Heart left ventricle (tissue), 16 donors: ENCODE measurements at regions of chr12 and their contacts with region 1.

Region 1: GRCh38 chr12:89212339-89212771 is 139.9 kb downstream of the DUSP6 start:
- DNase-seq: peak in 4 of 5 donors; percentile 38 to 54 (median 48)
- ATAC-seq: peak; percentile 83 to 97 (median 86)
- H3K4me3 ChIP-seq: no peak overlapping the region
- H3K27ac ChIP-seq: peak overlapping the region; percentile 35 to 76 (median 60)
- H3K4me1 ChIP-seq: peaks cover 0 to 43% (median 9%) of the 10 kb centered on the region in 12 donors
- H3K27me3 ChIP-seq: no peaks in the 10 kb centered on the region
- CTCF ChIP-seq: no peak
- POLR2A ChIP-seq: no peak

Region 2: DNA sequence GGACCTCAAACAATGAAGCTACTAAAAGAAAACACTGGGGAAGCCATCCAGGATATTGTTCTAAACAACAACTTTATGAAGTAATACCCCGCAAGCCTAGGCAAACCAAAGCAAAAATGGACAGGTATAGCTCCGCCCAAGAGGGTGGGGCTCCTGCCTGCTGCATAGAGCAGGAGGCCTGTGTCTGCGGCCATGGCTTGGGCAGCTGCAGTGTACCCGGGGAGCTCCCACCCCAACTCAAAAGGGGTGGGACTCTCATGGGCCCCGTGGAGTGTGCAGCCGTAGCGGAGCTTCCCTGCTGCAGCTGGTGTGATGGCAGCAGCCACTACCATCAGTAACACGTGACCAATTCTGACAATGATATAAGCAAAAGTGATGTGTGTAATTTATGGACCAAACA is 367.9 kb before region 1 on chr12:
- intact Hi-C with region 1: no loop called
- DNase-seq: no peak
- ATAC-seq: no peak
- H3K4me3 ChIP-seq: no peak overlapping the region
- H3K27ac ChIP-seq: no peak overlapping the region
- H3K4me1 ChIP-seq: no peaks in the 10 kb centered on the region
- H3K27me3 ChIP-seq: no peaks in the 10 kb centered on the region
- CTCF ChIP-seq: no peak
- POLR2A ChIP-seq: no peak

Region 3: GRCh38 chr12:89135976-89136634 is 76.2 kb before region 1 on chr12:
- intact Hi-C with region 1: loop called in 1 of 10 experiments (anchors 5 kb)
- DNase-seq: no peak
- ATAC-seq: no peak
- H3K4me3 ChIP-seq: no peak overlapping the region
- H3K27ac ChIP-seq: peak overlapping the region in 1 of 12 donors; percentile 10
- H3K4me1 ChIP-seq: peaks cover 0 to 24% (median 10%) of the 10 kb centered on the region in 12 donors
- H3K27me3 ChIP-seq: no peaks in the 10 kb centered on the region
- CTCF ChIP-seq: no peak
- POLR2A ChIP-seq: no peak